ENCODE measurements at regions of chr3 and their contacts with region 1.

Region 1: DNA sequence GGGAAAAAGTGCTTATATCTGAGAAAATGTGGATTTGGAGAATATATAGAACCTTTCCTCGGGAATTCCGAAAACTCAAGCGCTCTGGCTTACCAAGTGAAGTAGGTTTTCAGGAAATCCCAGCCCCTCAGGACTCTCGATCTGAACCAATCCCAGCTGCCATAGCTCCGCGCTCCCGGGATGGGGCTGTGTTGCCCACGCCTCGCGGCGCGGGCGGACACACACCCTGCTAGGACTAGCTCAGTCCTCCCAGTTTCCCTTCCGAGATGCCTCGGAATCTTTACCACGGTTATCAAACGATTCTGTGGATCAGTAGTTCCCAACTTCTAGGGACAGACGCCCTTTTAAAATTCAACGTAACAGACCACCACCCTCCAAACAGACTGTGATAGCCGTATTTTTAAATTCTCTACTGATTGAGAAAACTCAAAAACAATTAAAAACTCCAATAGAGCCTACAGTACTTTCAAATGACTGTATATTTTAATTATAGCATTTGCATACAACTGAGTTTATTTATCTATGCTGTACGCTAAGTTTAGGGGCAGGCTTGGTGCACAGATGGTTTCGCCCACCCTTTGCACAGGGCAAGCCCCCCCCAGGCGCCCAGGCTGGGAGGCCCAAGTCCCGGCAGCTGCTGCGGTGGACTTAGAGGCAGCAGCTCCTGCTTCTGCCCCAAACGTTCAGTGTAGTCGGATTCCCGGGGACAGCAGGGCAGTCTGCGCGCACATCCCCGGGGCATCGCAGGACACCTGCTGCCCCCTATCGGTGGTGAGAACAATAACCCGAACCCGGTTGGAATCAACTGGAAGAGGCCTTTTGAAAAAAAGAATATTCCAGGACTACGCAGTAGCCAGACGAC is 52.3 kb downstream of the CCDC54 start:
- DNase-seq: peak; percentile 78 to 84
- H3K4me3 ChIP-seq: peak overlapping the region; percentile 16 to 50 (median 28)
- H3K27ac ChIP-seq: peak overlapping the region; percentile 93 to 99 (median 98)
- H3K4me1 ChIP-seq: peaks cover 6 to 12% of the 10 kb centered on the region in 2 donors
- H3K27me3 ChIP-seq: no peaks in the 10 kb centered on the region
- CTCF ChIP-seq: peak; percentile 73 to 93 (median 84)
- POLR2A ChIP-seq: peak in 1 of 2 donors; percentile 60

Region 2: GRCh38 chr3:107235928-107236315 is 193.6 kb before region 1 on chr3:
- intact Hi-C with region 1: loop called (anchors 10 kb)
- DNase-seq: peak; percentile 18 to 43
- H3K4me3 ChIP-seq: peak overlapping the region in 2 of 3 donors; percentile 5 to 17
- H3K27ac ChIP-seq: peak overlapping the region in 2 of 3 donors; percentile 33 to 47
- H3K4me1 ChIP-seq: no peaks in the 10 kb centered on the region
- H3K27me3 ChIP-seq: no peaks in the 10 kb centered on the region
- CTCF ChIP-seq: peak; percentile 63 to 99 (median 90)
- POLR2A ChIP-seq: no peak

Region 3: DNA sequence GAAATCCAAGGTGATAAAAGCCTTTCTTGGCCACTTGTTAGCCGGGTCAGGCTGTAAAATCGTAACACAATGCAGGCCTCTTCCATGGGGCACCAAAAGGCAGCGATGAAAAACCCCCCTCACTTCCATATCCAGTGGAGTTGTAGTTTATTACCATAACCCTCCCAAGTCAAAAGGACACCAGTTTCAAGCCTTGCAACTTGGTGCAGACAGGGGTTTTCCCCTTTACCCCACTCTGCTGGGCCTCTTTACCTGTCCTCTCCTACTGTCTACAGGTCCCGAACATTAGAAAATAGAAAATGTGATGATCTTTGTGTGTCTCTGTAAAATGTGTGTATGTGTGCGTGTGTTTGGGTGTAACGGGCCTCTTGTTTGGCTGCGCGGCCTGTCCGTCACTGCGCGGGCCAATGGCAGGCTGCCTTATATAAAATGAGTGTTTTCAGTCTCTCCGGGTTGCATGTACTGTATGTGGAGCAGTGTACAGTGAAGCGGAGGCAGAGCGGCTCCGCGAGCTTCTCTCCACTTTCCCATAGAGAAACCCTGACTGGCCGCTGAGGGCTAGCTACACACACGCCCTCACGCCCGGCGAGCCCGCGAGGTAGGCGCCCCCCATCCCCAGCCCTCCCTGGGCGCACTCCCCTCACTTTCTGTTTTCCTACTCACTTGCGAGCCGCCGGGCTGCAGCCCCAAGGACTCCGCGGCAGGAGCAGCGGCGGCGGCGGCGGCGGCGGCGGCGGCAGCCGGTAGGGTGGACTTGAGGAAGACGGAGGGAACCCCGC is 93.1 kb after region 1 on chr3 and contains the start of gene BBX:
- intact Hi-C with region 1: loop called (anchors 5 kb)
- DNase-seq: peak; percentile 93
- H3K4me3 ChIP-seq: peak within 1 kb of the TSS; percentile 75 to 86 (median 82)
- H3K27ac ChIP-seq: peak within 1 kb of the TSS; percentile 98
- H3K4me1 ChIP-seq: peaks cover 6 to 8% of the 10 kb centered on the region in 2 donors
- H3K27me3 ChIP-seq: no peaks in the 10 kb centered on the region
- CTCF ChIP-seq: no peak
- POLR2A ChIP-seq: peak; percentile 51 to 97
- total RNA-seq, gene BBX: 73.0 to 216 (median 106) TPM

Region 4: GRCh38 chr3:108250626-108251025 is 821.1 kb after region 1 on chr3:
- intact Hi-C with region 1: no loop called
- DNase-seq: no peak
- H3K4me3 ChIP-seq: no peak overlapping the region
- H3K27ac ChIP-seq: no peak overlapping the region
- H3K4me1 ChIP-seq: no peaks in the 10 kb centered on the region
- H3K27me3 ChIP-seq: no peaks in the 10 kb centered on the region
- CTCF ChIP-seq: no peak
- POLR2A ChIP-seq: no peak

Region 5: GRCh38 chr3:108602249-108602934 is 1172.8 kb after region 1 on chr3:
- intact Hi-C with region 1: loop called (anchors 10 kb)
- DNase-seq: peak; percentile 42 to 60
- H3K4me3 ChIP-seq: no peak overlapping the region
- H3K27ac ChIP-seq: peak overlapping the region; percentile 21 to 66 (median 34)
- H3K4me1 ChIP-seq: peaks cover 7 to 11% of the 10 kb centered on the region in 2 donors
- H3K27me3 ChIP-seq: no peaks in the 10 kb centered on the region
- CTCF ChIP-seq: peak in 1 of 6 experiments; percentile 24
- POLR2A ChIP-seq: no peak